ENCODE measurements at regions of chr1 and their contacts with region 1.

Region 1: DNA sequence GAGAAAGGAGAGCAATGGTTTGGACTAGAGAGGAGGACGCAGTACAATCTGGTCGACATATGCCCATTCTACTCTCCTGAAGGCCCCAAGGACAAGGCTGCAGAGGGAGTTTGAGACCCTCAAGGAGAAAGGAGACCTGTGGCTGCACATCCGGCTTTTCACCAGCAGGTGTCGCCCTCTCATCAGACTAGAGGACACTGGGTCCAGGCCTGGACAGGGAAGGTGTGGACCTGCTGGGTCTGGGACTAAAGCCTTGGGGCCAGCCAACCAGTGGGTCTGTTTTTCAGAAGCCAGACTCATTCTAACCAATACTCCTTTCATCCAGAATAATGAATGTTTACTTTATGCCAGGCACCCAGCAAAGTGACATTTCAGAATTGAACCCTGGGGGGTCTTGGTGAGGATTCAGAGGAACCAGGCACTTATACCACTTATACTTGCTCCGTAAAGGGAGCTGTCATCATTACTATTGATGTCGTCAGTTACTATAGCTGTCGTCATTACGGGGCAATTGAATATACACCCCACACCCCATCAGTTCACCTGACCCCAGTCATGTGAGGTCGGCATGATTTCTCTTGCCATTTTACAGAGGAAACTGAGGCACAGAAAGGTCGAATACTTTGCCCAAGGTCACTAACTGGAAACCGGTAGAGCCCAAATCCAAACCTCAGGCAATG is 5.1 kb downstream of the SRARP start:
- DNase-seq: peak; percentile 77 to 82
- H3K4me3 ChIP-seq: no peak overlapping the region
- H3K4me3 Mint-ChIP-seq: no peak overlapping the region
- H3K27ac Mint-ChIP-seq: no peak overlapping the region
- H3K4me1 ChIP-seq: no peaks in the 10 kb centered on the region
- H3K4me1 Mint-ChIP-seq: no peaks in the 10 kb centered on the region
- H3K27me3 ChIP-seq: no peaks in the 10 kb centered on the region
- H3K27me3 Mint-ChIP-seq: no peaks in the 10 kb centered on the region
- CTCF ChIP-seq: peak; percentile 87 to 91

Region 2: DNA sequence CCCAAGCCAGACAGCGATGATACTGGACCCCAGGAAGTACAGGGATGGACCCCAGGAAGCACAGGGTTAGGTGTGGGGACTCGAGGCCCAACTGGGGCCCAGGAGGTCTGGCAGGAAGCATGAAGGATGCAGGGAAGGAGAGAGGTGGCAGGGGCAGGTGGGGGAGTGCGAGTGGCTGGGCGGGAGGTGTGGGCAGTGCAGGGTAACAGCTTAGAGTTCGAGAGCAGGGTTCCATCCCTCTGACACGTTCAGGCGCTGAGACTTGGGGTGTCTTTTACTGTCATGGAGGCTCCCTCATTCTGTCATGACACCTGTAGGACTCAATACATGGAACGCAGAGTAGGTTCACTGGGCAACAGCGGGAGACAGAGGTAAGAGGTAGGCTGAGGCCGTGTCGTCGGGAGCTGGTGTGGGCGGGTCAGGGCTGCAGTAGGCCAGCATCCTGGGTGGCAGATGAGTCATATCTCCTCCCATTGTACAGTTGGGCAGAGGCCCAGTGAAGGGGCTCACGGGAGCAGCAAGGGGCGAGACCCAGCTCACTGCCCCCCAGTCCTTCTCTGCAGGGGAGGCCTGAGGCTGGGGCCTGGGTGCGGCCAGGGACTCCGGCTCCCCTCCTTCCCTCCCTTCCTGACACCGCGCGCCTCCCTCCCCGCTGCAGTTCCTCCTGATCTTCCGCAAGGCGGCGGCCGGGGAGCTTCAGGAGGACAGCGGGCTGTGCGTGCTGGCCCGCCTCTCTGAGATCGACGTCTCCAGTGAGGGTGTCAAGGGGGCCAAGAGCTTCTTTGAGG is 582.5 kb before region 1 on chr1:
- CTCF ChIA-PET with region 1: no interaction called
- POLR2A ChIA-PET with region 1: no interaction called
- intact Hi-C with region 1: no loop called
- DNase-seq: no peak
- H3K4me3 ChIP-seq: no peak overlapping the region
- H3K4me3 Mint-ChIP-seq: no peak overlapping the region
- H3K27ac Mint-ChIP-seq: peak overlapping the region; percentile 59
- H3K4me1 ChIP-seq: peaks cover 15% of the 10 kb centered on the region
- H3K4me1 Mint-ChIP-seq: peaks cover 9% of the 10 kb centered on the region
- H3K27me3 ChIP-seq: no peaks in the 10 kb centered on the region
- H3K27me3 Mint-ChIP-seq: no peaks in the 10 kb centered on the region
- CTCF ChIP-seq: no peak

Region 3: GRCh38 chr1:16055613-16056520 is 46.7 kb after region 1 on chr1:
- CTCF ChIA-PET with region 1: interaction called, 4 read pairs
- POLR2A ChIA-PET with region 1: no interaction called
- intact Hi-C with region 1: loop called (anchors 1 kb)
- DNase-seq: peak; percentile 87
- H3K4me3 ChIP-seq: no peak overlapping the region
- H3K4me3 Mint-ChIP-seq: no peak overlapping the region
- H3K27ac Mint-ChIP-seq: no peak overlapping the region
- H3K4me1 ChIP-seq: no peaks in the 10 kb centered on the region
- H3K4me1 Mint-ChIP-seq: no peaks in the 10 kb centered on the region
- H3K27me3 ChIP-seq: no peaks in the 10 kb centered on the region
- H3K27me3 Mint-ChIP-seq: no peaks in the 10 kb centered on the region
- CTCF ChIP-seq: peak; percentile 68 to 80